SK-N-SH (cell line): ENCODE measurements at regions of chr17 and their contacts with region 1.

Region 1: GRCh38 chr17:67157732-67158639 is 87.0 kb downstream of the HELZ start:
- DNase-seq: peak; percentile 75
- H3K4me3 ChIP-seq: no peak overlapping the region
- H3K27ac ChIP-seq: peak overlapping the region; percentile 47 to 97; a peak in 3 of 4 replicates
- H3K4me1 ChIP-seq: peaks cover 5 to 34% of the 10 kb centered on the region in 2 experiments; a peak in 3 of 4 replicates
- H3K27me3 ChIP-seq: no peaks in the 10 kb centered on the region
- CTCF ChIP-seq: peak; percentile 76
- EP300 ChIP-seq: peak in 1 of 2 experiments; percentile 18; a peak in 1 of 4 replicates
- RAD21 ChIP-seq: peak; percentile 100

Region 2: DNA sequence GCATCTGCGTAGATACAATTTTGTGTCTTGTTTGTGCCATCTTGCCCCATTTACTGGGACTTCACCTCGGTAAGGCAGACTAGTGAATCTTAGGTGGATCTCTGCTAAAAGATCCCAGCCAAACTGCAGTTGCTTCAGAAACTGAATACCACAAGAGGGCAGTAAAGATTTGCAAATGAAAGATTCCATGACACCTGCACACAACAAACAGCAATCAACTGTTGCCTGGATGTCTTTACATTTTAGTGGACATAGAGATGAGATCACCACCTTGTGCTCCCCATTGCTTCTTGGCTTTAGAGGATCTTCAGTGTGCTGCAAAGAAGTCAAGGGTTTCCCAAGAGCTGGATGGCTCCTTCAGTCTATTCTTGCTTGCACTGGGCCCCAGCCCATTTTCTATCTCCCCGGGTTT is 442.2 kb before region 1 on chr17:
- CTCF ChIA-PET with region 1: interaction called, 33 read pairs
- POLR2A ChIA-PET with region 1: no interaction called
- DNase-seq: peak; percentile 74
- H3K4me3 ChIP-seq: no peak overlapping the region
- H3K27ac ChIP-seq: no peak overlapping the region
- H3K4me1 ChIP-seq: peaks cover 0 to 22% of the 10 kb centered on the region in 2 experiments; a peak in 1 of 4 replicates
- H3K27me3 ChIP-seq: no peaks in the 10 kb centered on the region
- CTCF ChIP-seq: peak; percentile 82
- EP300 ChIP-seq: peak in 1 of 2 experiments; percentile 16; a peak in 1 of 4 replicates
- RAD21 ChIP-seq: peak; percentile 98

Region 3: GRCh38 chr17:66906321-66907278 is 251.4 kb before region 1 on chr17:
- CTCF ChIA-PET with region 1: interaction called, 20 read pairs
- POLR2A ChIA-PET with region 1: no interaction called
- DNase-seq: peak; percentile 87
- H3K4me3 ChIP-seq: no peak overlapping the region; a peak in 1 of 4 replicates
- H3K27ac ChIP-seq: no peak overlapping the region; a peak in 1 of 4 replicates
- H3K4me1 ChIP-seq: peaks cover 9 to 20% of the 10 kb centered on the region in 2 experiments; a peak in 3 of 4 replicates
- H3K27me3 ChIP-seq: no peaks in the 10 kb centered on the region; the same call in 1 of the 2 replicates
- CTCF ChIP-seq: peak; percentile 98
- EP300 ChIP-seq: peak in 1 of 2 experiments; percentile 26; a peak in 1 of 4 replicates
- RAD21 ChIP-seq: peak; percentile 95

Region 4: GRCh38 chr17:66964930-66965800 is 192.8 kb before region 1 on chr17:
- CTCF ChIA-PET with region 1: interaction called, 60 read pairs
- POLR2A ChIA-PET with region 1: interaction called, 12 read pairs
- DNase-seq: peak; percentile 99
- H3K4me3 ChIP-seq: peak overlapping the region; percentile 50 to 93
- H3K27ac ChIP-seq: peak overlapping the region; percentile 24 to 97; a peak in 3 of 4 replicates
- H3K4me1 ChIP-seq: peaks cover 0 to 64% of the 10 kb centered on the region in 2 experiments; a peak in 2 of 4 replicates
- H3K27me3 ChIP-seq: no peaks in the 10 kb centered on the region
- CTCF ChIP-seq: no peak
- EP300 ChIP-seq: no peak
- RAD21 ChIP-seq: no peak

Region 5: DNA sequence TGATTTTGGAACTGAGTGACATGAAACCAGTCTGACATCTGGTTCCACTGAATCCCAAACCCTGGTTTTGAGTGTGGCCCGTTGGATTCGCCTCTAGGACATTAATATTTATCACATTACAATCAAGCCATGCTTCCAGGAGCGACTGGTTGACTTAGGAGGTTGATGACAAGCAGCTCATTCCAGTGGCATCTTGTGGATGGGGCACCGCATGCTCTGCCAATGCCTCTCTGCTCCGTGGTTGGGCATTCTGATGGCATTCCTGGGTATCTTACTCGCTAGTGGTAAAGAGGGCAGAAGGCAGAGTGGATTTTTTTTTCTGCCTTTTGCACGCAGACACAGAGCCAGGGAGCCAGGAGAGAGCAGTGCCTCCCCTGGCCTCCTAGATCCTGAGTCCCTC is 162.0 kb before region 1 on chr17:
- CTCF ChIA-PET with region 1: interaction called, 13 read pairs
- POLR2A ChIA-PET with region 1: interaction called, 3 read pairs
- DNase-seq: no peak
- H3K4me3 ChIP-seq: no peak overlapping the region
- H3K27ac ChIP-seq: peak overlapping the region in 1 of 2 experiments; percentile 36; a peak in 1 of 4 replicates
- H3K4me1 ChIP-seq: peaks cover 0 to 35% of the 10 kb centered on the region in 2 experiments; a peak in 2 of 4 replicates
- H3K27me3 ChIP-seq: no peaks in the 10 kb centered on the region
- CTCF ChIP-seq: no peak
- EP300 ChIP-seq: peak in 1 of 2 experiments; percentile 10; a peak in 1 of 4 replicates
- RAD21 ChIP-seq: no peak

Region 6: DNA sequence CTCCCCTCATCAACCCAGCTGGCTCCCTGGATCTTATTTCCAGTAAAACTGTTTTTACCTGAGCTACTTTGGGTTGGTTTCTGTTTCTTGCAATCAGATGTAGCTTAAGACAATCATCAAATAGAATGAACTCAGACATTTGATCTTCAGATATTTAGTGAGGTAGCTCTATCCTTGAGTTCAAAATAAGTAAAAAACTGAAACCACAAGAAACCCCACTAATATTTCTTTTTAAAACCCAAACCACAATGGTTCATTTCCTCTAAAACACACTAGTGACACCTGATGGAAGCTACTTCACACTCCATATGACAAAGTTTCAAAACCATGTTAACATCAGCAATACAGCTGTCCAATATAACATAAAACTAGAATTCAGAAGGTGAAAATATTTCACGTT is 75.9 kb before region 1 on chr17:
- CTCF ChIA-PET with region 1: interaction called, 11 read pairs
- POLR2A ChIA-PET with region 1: no interaction called
- DNase-seq: no peak
- H3K4me3 ChIP-seq: no peak overlapping the region
- H3K27ac ChIP-seq: peak overlapping the region in 1 of 2 experiments; percentile 36; a peak in 1 of 4 replicates
- H3K4me1 ChIP-seq: peaks cover 0 to 10% of the 10 kb centered on the region in 2 experiments; a peak in 2 of 4 replicates
- H3K27me3 ChIP-seq: no peaks in the 10 kb centered on the region
- CTCF ChIP-seq: no peak
- EP300 ChIP-seq: no peak
- RAD21 ChIP-seq: peak; percentile 68

Region 7: GRCh38 chr17:67139784-67140657 is 18.0 kb before region 1 on chr17:
- CTCF ChIA-PET with region 1: interaction called, 15 read pairs
- POLR2A ChIA-PET with region 1: no interaction called
- DNase-seq: no peak
- H3K4me3 ChIP-seq: no peak overlapping the region
- H3K27ac ChIP-seq: peak overlapping the region in 1 of 2 experiments; percentile 47; a peak in 1 of 4 replicates
- H3K4me1 ChIP-seq: peaks cover 8 to 11% of the 10 kb centered on the region in 2 experiments; a peak in 3 of 4 replicates
- H3K27me3 ChIP-seq: no peaks in the 10 kb centered on the region
- CTCF ChIP-seq: no peak
- EP300 ChIP-seq: peak in 1 of 2 experiments; percentile 48; a peak in 1 of 4 replicates
- RAD21 ChIP-seq: peak; percentile 35

Region 8: GRCh38 chr17:67227488-67227887 is 69.5 kb after region 1 on chr17:
- CTCF ChIA-PET with region 1: no interaction called
- POLR2A ChIA-PET with region 1: no interaction called
- DNase-seq: no peak
- H3K4me3 ChIP-seq: no peak overlapping the region
- H3K27ac ChIP-seq: no peak overlapping the region
- H3K4me1 ChIP-seq: peaks cover 0 to 2% of the 10 kb centered on the region in 2 experiments; a peak in 2 of 4 replicates
- H3K27me3 ChIP-seq: no peaks in the 10 kb centered on the region
- CTCF ChIP-seq: no peak
- EP300 ChIP-seq: no peak
- RAD21 ChIP-seq: no peak